Body of pancreas (tissue), 4 donors: ENCODE measurements at regions of chr1 and their contacts with region 1.

Region 1: GRCh38 chr1:228684607-228685006 is 50.7 kb upstream of the RHOU start:
- DNase-seq: peak in 1 of 4 donors; percentile 24
- ATAC-seq: no peak
- H3K4me3 ChIP-seq: no peak overlapping the region
- H3K27ac ChIP-seq: no peak overlapping the region
- H3K4me1 ChIP-seq: no peaks in the 10 kb centered on the region
- H3K27me3 ChIP-seq: no peaks in the 10 kb centered on the region
- CTCF ChIP-seq: no peak
- POLR2A ChIP-seq: no peak

Region 2: GRCh38 chr1:229230140-229230892 is 545.7 kb after region 1 on chr1:
- intact Hi-C with region 1: loop called (anchors 10 kb)
- DNase-seq: peak in 2 of 4 donors; percentile 14 to 17
- ATAC-seq: peak; percentile 25
- H3K4me3 ChIP-seq: no peak overlapping the region
- H3K27ac ChIP-seq: peak overlapping the region; percentile 71 to 91 (median 80)
- H3K4me1 ChIP-seq: peaks cover 42% of the 10 kb centered on the region
- H3K27me3 ChIP-seq: no peaks in the 10 kb centered on the region
- CTCF ChIP-seq: no peak
- POLR2A ChIP-seq: peak in 1 of 3 donors; percentile 9